Psoas muscle (tissue), 8 donors: ENCODE measurements at regions of chr1 and their contacts with region 1.

Region 1: GRCh38 chr1:53485478-53486394 is 26.5 kb downstream of the DMRTB1 start:
- DNase-seq: peak; percentile 77 to 86
- ATAC-seq: peak; percentile 85 to 96 (median 92)
- H3K4me3 ChIP-seq: no peak overlapping the region
- H3K27ac ChIP-seq: no peak overlapping the region
- H3K4me1 ChIP-seq: no peaks in the 10 kb centered on the region
- H3K27me3 ChIP-seq: peaks cover 0 to 49% (median 0%) of the 10 kb centered on the region in 3 donors
- CTCF ChIP-seq: peak; percentile 84

Region 2: DNA sequence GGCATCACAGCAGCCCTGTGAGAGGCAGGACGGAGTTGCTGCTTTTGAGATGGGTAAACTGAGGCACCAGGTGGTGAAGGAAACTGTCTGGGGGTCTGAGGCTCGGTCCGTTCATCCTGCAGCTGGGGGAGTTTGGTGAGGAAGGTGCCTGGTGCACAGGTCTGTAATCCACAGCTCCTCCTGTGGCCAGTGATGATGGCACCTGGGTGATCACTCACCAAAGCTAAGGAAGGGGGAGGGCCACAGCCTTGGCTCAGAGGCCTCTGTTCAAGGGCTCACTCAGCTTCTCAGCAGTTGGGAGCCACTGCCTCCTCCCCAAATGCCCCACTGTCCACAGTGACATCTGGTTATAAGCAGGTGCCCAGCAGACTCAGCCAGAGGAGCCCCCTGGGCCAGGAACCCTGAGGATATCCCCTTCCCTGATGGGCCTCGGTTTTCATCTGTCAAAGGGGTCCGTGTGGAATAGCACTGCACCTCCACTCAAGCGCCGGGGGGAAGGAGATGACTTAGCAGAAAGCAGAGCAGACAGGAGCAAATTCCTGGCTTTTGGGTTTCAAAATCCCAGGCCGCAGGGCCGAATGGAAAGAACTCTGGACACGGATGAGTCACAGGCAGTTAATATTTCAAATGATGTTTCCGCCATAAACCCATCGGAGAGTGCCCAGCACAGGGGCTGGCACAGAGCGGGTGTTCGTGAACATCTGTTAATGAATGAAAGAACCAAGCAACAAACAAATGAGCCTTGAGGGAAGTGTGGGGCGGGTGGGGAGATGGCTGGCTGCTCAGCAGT is 56.2 kb after region 1 on chr1:
- intact Hi-C with region 1: loop called in 1 of 2 experiments (anchors 2 kb)
- DNase-seq: peak; percentile 52 to 53
- ATAC-seq: peak; percentile 68 to 80 (median 72)
- H3K4me3 ChIP-seq: no peak overlapping the region
- H3K27ac ChIP-seq: peak overlapping the region; percentile 47
- H3K4me1 ChIP-seq: peaks cover 15% of the 10 kb centered on the region
- H3K27me3 ChIP-seq: no peaks in the 10 kb centered on the region
- CTCF ChIP-seq: peak; percentile 39

Region 3: GRCh38 chr1:53593758-53594380 is 108.1 kb after region 1 on chr1:
- intact Hi-C with region 1: loop called in 1 of 2 experiments (anchors 1 kb)
- DNase-seq: no peak
- ATAC-seq: peak in 2 of 4 donors; percentile 44 to 66
- H3K4me3 ChIP-seq: no peak overlapping the region
- H3K27ac ChIP-seq: no peak overlapping the region
- H3K4me1 ChIP-seq: no peaks in the 10 kb centered on the region
- H3K27me3 ChIP-seq: no peaks in the 10 kb centered on the region
- CTCF ChIP-seq: peak; percentile 28

Region 4: GRCh38 chr1:53681977-53682685 is 196.4 kb after region 1 on chr1:
- intact Hi-C with region 1: loop called (anchors 1 to 5 kb)
- DNase-seq: peak; percentile 35 to 62
- ATAC-seq: peak; percentile 41 to 64 (median 50)
- H3K4me3 ChIP-seq: no peak overlapping the region
- H3K27ac ChIP-seq: no peak overlapping the region
- H3K4me1 ChIP-seq: no peaks in the 10 kb centered on the region
- H3K27me3 ChIP-seq: peaks cover 0 to 39% (median 9%) of the 10 kb centered on the region in 3 donors
- CTCF ChIP-seq: peak; percentile 48

Region 5: DNA sequence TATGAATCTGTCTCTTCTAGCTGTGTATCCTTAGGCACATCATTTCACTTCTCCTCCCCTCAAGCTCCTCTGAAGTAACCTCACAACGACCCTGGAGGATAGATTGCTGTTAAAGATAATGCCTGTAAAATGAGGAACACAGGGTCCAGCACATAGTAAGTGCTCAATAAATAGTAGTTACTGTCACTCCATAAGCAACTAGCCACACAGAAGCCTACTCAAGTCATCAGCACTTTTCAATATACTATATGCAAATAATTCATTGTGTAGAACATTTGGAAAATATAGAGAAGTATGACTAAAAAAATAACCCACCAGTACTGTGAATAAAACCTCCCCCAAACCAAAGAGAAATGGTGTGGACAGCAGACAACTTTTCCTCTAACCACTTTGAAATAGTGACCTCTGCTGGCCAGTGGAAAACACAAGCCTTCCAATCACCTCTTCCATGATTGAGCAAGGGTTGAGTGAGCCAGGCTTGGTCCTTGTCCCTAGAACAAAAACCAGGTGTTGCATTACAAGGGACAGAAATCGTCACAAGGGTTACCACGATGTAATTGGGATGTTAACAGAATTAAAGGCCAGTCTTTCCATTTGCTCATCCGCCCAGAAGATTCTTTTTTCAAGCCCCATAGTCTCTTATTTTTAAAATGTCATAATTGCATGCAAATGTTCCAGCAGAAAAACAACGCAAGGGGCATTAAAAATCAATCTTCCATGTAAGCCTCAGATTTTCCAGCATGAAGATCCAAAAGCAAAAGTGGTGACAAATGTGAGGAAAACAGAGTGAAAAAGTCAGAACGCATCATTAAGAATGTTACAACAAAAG is 269.0 kb after region 1 on chr1:
- intact Hi-C with region 1: loop called (anchors 2 to 5 kb)
- DNase-seq: no peak
- ATAC-seq: peak; percentile 59 to 81 (median 74)
- H3K4me3 ChIP-seq: no peak overlapping the region
- H3K27ac ChIP-seq: no peak overlapping the region
- H3K4me1 ChIP-seq: no peaks in the 10 kb centered on the region
- H3K27me3 ChIP-seq: no peaks in the 10 kb centered on the region
- CTCF ChIP-seq: peak; percentile 62

Region 6: DNA sequence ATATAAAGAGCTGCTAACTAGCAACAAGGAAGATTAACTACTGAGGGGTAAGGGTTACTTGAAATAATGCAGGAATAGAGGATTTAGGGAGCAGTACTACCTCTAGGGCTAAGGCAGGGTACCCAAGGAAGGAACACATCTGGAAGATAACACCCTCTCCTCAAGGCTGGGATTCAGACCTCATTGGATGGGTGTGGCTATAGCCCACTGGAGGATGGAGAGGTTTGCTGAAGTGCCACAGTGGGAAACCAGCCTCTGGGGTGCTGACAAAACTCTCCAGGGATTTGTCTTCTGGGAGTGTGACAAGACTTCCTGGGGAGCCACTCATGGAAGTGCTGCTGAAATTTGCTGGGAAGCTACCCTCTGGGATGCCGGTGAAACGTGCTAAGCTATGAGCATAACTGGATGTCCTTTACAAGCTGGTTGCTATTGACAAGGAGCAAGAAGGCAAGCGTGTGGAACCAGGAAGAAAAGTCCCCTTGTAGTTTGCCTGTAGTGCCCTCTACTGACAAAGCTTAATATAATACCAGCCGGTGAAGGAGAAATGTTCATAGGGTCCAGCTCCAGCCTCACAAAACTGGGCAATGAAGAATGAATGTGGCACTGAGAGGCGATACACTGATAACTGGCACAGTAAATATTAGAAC is 1852.2 kb after region 1 on chr1:
- intact Hi-C with region 1: no loop called
- DNase-seq: no peak
- ATAC-seq: peak in 1 of 4 donors; percentile 46
- H3K4me3 ChIP-seq: no peak overlapping the region
- H3K27ac ChIP-seq: no peak overlapping the region
- H3K4me1 ChIP-seq: no peaks in the 10 kb centered on the region
- H3K27me3 ChIP-seq: no peaks in the 10 kb centered on the region
- CTCF ChIP-seq: peak; percentile 31